ENCODE measurements at regions of chr1 and their contacts with region 1.

Region 1: DNA sequence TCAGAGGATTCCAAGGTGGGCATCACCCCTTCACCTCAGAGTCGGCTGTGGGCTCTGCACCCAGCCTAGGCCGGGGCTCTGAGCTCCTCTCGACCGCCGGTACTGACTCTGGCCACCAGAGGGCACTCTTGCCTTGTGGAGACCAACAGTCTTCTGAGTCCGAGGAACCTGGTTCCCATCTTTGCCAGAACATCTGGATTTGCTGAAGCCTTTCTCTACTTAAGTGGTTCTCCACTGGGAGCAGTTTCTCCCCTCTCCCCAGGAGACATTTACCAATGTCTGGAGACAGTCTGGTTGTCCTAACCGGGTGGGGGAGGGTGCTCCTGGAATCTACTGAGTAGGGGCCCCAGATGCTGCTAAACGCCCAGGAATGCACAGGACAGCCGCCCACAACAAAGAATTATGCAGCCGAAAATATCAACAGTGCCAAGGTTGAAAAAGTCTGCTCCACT is 9.4 kb downstream of the ETV3L start:
- DNase-seq: peak; percentile 94

Region 2: GRCh38 chr1:157124855-157125254 is 34.6 kb after region 1 on chr1:
- intact Hi-C with region 1: loop called in 1 of 2 experiments (anchors 5 kb)
- DNase-seq: no peak

Region 3: GRCh38 chr1:157156058-157156541 is 65.9 kb after region 1 on chr1:
- intact Hi-C with region 1: loop called (anchors 2 to 5 kb)
- DNase-seq: peak; percentile 92

Measured in posterior vena cava (tissue), 2 donors.